Left colon (tissue), 2 donors: ENCODE measurements at regions of chr7 and their contacts with region 1.

Region 1: DNA sequence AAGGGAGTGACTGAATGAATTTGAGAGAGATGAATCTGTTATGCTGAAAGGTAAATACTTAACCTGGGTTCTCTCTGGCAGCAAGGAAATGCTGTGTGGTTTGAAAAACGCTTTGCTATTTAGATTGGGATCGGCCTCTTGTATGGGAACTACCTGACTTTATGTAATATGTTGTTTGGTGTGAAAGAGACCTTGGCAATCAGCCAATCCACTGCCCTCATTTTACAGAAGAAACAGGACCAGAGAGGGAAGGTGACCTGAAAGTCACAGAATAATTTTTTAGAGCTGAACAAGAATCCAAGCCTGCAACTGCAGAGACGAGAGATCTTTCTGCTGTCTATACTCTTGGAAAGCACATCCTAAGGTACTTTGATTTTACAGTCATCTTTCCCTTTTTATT is 1.0 kb downstream of the BUD31 start:
- DNase-seq: no peak
- ATAC-seq: no peak

Region 2: GRCh38 chr7:98913612-98914011 is 496.2 kb before region 1 on chr7:
- intact Hi-C with region 1: no loop called
- DNase-seq: no peak
- ATAC-seq: no peak

Region 3: DNA sequence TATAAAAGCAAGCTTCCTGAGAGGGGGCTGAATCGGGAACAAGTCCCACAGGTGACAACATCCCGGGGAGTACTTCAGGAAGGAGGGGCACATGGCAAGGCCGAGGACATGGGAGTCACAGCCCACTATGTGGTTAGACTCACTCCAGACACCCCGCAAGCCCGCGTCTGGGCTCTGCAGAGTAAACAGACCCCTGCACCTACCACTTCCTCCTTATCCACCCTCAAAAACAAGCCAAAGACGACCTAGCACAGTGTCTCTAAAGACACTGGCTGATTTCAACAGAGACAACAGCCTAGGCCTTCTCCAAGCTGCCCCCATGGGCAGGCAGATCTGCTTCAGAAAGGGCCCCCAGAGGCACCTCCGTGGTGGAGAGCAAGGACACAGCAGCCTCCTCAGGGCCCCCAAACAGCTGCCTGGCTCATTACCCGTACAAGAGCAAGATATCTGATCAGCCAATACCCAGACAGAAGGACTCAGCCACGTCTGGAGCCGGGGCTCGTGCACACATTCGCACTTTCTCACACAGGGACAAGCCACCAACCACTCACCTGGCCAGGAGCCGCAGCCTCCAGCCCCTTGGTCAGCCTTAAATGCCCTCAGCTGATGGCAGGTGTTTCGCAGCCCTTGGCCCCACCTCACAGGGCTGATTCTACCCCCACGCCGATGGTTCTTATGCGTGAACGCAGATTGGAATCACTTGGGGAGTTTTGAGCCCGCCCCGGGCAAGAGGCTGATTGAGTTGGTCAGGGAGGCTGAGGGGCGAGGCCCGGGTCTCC is 191.2 kb before region 1 on chr7:
- intact Hi-C with region 1: no loop called
- DNase-seq: no peak
- ATAC-seq: peak; percentile 13

Region 4: DNA sequence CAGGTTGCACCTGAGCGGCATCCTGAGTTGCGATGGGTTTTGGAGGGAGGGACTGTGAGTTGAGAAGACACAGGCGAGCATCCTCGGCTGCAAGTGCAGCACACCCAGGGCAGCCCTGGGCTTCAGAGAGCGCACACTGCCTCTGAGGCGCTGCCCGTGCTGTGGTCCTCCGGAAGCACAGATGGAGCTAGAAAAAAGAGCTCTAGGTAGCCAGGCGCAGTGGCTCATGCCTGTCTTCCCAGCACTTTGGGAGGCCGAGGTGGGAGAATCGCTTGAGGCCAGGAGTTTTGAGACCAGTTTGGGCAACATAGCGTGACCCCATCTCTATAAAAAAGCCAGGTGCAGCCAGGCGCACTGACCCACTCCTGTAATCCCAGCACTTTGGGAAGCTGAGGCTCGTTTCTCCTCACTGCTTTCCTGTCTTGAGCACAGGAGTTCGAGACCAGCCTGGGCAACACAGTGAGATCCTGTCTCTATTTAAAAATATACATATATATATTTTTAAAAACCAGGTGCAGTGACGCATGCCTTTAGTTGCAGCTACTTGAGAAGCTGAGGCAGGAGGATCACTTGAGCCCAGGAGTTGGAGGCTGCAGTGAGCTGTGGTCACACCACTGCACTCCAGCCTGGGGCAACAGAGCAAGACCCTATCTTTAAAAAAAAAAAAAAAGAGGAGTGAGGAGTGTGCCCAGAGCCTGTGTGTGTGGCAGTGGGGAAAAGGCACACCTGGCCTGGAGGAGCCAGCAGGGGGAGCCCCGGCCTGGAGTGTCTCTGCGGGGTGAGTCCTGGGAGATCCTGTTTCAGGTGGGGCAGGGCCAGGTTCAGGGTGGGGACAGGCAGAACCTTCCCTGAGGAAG is 44.6 kb before region 1 on chr7:
- intact Hi-C with region 1: loop called in 1 of 2 experiments (anchors 10 kb)
- DNase-seq: peak; percentile 83 to 84
- ATAC-seq: peak; percentile 95

Region 5: DNA sequence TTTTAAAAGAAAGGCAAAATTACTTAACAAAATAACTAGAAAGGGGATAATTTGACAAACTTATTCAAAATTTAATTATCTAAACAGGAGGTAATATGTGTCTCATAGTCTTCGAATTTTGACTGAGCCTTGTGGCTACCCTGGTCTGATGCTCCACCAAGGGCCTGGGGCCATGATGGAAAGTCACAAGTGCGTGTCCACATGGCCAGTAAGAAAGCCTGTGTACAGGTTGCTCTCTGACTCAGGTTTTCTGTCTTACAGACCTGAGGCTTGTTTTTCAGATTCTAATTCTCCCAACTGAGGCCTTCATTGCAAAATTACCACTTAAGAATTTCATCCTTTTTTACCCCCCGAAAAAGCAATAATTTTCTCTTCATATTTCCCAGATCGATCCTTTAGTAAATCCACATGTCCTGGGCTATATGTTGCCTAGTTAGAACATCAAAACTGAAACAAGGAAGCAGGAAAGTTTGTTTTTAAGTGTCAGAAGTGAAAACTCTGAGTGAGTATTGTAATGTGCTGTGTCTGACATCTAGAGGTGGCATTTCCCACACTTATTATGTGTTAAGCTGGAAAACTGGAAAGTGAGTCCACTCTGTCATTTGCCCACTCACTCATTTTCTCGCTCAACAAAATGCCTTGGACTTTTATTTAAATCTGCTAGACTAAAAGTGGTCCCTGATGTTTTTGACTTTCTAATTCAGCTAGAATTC is 428.0 kb after region 1 on chr7:
- intact Hi-C with region 1: no loop called
- DNase-seq: no peak
- ATAC-seq: peak; percentile 77